ENCODE measurements at regions of chr17 and their contacts with region 1.

Region 1: DNA sequence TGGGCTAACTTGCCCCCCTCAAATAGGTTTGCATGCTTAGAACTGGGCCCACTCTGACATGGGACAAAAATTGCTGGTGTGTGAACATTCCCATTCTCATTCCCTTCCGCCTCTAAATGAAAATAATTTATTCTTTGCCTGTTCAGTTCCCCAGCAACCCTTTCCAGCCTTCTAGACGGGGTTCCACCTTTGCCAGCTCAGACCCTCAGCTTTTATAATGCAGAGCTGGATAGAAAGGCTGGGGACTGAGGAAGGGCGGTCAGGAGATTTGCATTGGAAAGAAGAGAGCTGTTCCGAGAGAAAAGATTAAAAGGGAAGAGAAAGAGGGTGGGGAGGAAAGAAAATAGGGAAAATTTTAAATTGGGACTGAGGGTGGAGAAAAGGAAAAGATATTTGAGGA is 151.1 kb upstream of the WSCD1 start:
- DNase-seq: no peak
- ATAC-seq: no peak
- H3K4me3 ChIP-seq: no peak overlapping the region
- H3K27ac ChIP-seq: no peak overlapping the region
- H3K4me1 ChIP-seq: no peaks in the 10 kb centered on the region
- H3K27me3 ChIP-seq: peaks cover 0 to 5% (median 0%) of the 10 kb centered on the region in 7 donors
- CTCF ChIP-seq: no peak

Region 2: GRCh38 chr17:5753421-5753820 is 165.7 kb before region 1 on chr17:
- intact Hi-C with region 1: loop called in 1 of 10 experiments (anchors 5 kb)
- DNase-seq: no peak
- ATAC-seq: no peak
- H3K4me3 ChIP-seq: no peak overlapping the region
- H3K27ac ChIP-seq: no peak overlapping the region
- H3K4me1 ChIP-seq: no peaks in the 10 kb centered on the region
- H3K27me3 ChIP-seq: peaks cover 0 to 27% (median 19%) of the 10 kb centered on the region in 7 donors
- CTCF ChIP-seq: no peak

Measured in heart right ventricle (tissue), 16 donors.